Activated CD4-positive, alpha-beta T cell treated with anti-CD3 and anti-CD28 coated beads, Interleukin-2, amount 10 ng/mL, durations not matched to agents 7 days and 5 days (primary cell): ENCODE measurements at regions of chr7 and their contacts with region 1.

Region 1: DNA sequence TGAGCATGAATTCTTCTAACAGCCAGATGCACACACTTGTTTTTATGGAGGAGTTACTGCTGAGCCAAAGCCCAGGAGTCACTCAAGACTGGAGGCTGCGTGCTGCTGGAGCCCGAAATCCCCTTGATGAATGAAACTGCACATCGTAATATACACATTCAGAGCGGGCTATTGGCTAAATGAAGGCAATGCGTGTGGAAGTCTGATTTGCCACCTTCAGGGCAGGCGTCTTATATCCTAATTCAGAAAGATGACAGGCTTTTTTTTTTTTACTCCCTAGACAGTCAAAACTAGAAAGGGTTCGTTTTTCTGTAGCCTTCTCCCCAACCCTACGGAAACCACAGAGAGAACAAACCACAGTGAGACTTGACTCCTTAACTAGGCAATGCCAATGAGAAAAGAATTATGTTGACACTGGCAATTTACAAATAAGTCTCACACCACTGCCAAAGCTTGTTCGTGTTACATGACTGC is 227.2 kb upstream of the KLF14 start:
- DNase-seq: peak; percentile 90
- H3K4me3 Mint-ChIP-seq: peak overlapping the region; percentile 92
- H3K27ac Mint-ChIP-seq: peak overlapping the region; percentile 98
- H3K4me1 Mint-ChIP-seq: peaks cover 52% of the 10 kb centered on the region
- H3K27me3 Mint-ChIP-seq: no peaks in the 10 kb centered on the region

Region 2: GRCh38 chr7:130566168-130566897 is 394.8 kb before region 1 on chr7:
- CTCF ChIA-PET with region 1: no interaction called
- POLR2A ChIA-PET with region 1: no interaction called
- DNase-seq: no peak
- H3K4me3 Mint-ChIP-seq: no peak overlapping the region
- H3K27ac Mint-ChIP-seq: no peak overlapping the region
- H3K4me1 Mint-ChIP-seq: peaks cover 8% of the 10 kb centered on the region
- H3K27me3 Mint-ChIP-seq: no peaks in the 10 kb centered on the region

Region 3: DNA sequence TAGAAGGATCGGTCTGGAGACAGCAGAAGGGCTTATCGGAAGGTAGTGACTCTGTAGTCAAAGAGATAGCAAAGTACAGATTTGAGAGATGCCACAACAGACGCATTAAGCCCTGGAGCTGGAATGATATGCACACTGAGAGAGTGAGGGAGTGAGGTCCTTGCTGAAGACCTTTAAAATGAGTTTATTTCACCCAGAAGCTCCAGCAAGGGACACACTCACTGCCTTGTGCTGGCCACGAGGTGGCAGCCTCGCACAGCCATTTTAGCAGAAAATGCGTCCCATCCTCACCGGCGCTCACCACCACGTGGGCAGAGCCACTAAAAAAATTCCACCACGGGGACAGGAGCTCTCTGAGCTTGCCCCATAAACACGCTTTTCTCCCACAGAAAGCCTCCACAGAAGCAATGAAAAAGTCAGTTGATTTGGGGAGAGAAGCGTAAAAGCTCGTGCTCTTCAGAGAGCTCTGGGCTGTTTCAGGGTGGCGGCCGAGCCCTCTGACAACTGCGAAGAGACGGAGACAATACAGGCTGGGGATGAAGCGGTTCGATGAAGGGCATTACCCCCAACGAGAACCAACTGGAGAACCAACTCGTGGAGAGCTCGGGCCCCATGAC is 64.2 kb before region 1 on chr7:
- CTCF ChIA-PET with region 1: interaction called, 18 read pairs
- POLR2A ChIA-PET with region 1: interaction called, 3 read pairs
- DNase-seq: peak; percentile 80
- H3K4me3 Mint-ChIP-seq: no peak overlapping the region
- H3K27ac Mint-ChIP-seq: peak overlapping the region; percentile 66
- H3K4me1 Mint-ChIP-seq: peaks cover 81% of the 10 kb centered on the region
- H3K27me3 Mint-ChIP-seq: no peaks in the 10 kb centered on the region

Region 4: DNA sequence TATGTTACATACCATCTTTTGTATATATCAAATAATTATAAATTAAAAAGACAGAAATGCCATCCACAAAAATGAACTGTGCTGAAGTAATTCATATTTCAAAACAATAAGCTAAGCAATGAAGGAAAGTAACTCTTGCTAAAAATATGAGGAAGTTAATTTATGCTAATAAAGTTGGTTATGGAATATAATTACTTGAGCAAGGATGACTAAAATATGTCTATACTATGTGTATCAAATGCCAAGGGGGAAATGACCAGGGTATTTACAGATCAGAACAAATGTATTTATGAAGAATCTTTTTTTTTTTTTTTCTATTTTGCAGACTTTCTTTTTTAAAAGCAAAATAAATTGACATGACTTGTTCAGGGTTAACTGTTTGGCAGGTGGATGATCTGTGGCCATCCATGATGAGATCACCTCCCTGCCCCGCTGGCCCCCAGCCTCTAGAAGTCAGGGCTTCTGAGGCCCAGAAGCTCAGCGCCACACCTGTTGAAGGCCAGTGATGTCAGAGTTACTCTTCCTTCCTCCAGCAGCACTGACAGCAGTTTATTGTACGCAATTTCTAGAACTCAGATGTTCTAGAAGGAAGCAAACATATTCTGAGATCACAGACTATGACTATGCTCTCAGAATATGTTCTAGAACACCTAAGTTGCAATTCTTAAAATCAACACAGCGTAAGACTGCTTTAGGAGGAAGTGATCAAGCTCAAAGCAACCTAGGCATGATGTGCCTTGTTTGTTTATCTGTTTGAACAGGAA is 31.1 kb before region 1 on chr7:
- CTCF ChIA-PET with region 1: interaction called, 18 read pairs
- POLR2A ChIA-PET with region 1: interaction called, 5 read pairs
- DNase-seq: no peak
- H3K4me3 Mint-ChIP-seq: no peak overlapping the region
- H3K27ac Mint-ChIP-seq: peak overlapping the region; percentile 84
- H3K4me1 Mint-ChIP-seq: peaks cover 77% of the 10 kb centered on the region
- H3K27me3 Mint-ChIP-seq: no peaks in the 10 kb centered on the region

Region 5: GRCh38 chr7:130975731-130976130 is 14.6 kb after region 1 on chr7:
- CTCF ChIA-PET with region 1: interaction called, 26 read pairs
- POLR2A ChIA-PET with region 1: no interaction called
- DNase-seq: no peak
- H3K4me3 Mint-ChIP-seq: no peak overlapping the region
- H3K27ac Mint-ChIP-seq: no peak overlapping the region
- H3K4me1 Mint-ChIP-seq: peaks cover 47% of the 10 kb centered on the region
- H3K27me3 Mint-ChIP-seq: no peaks in the 10 kb centered on the region

Region 6: DNA sequence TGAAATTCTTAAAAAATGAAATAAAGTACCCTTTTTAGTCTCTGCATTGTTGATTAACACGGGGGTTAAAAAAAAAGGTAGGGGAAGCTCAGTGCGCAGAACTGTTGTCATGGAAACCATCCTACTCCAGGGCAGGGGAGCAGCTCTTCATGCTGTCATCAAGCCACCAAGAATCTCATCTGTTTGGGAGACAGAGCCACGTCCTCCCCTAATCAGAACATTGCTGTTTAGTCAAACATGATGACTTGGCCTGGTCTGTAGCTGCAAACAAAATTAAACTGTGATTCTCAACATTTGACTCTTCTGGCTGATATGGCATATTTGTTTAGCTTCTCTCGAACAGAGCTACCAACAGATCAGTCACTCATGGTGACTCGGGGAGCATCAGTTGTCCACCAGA is 27.3 kb after region 1 on chr7:
- CTCF ChIA-PET with region 1: interaction called, 15 read pairs
- POLR2A ChIA-PET with region 1: no interaction called
- DNase-seq: peak; percentile 17
- H3K4me3 Mint-ChIP-seq: no peak overlapping the region
- H3K27ac Mint-ChIP-seq: peak overlapping the region; percentile 81
- H3K4me1 Mint-ChIP-seq: peaks cover 69% of the 10 kb centered on the region
- H3K27me3 Mint-ChIP-seq: no peaks in the 10 kb centered on the region

Region 7: GRCh38 chr7:131040467-131040932 is 79.3 kb after region 1 on chr7:
- CTCF ChIA-PET with region 1: interaction called, 6 read pairs
- POLR2A ChIA-PET with region 1: interaction called, 10 read pairs
- DNase-seq: peak; percentile 72
- H3K4me3 Mint-ChIP-seq: peak overlapping the region; percentile 33
- H3K27ac Mint-ChIP-seq: no peak overlapping the region
- H3K4me1 Mint-ChIP-seq: peaks cover 38% of the 10 kb centered on the region
- H3K27me3 Mint-ChIP-seq: no peaks in the 10 kb centered on the region